Dendritic cell treated with granulocyte-macrophage colony-stimulating factor and Interleukin-4, amounts not matched to agents 40 ng/mL and 50 ng/mL, for 4 days (primary cell): ENCODE measurements at regions of chr1 and their contacts with region 1.

Region 1: DNA sequence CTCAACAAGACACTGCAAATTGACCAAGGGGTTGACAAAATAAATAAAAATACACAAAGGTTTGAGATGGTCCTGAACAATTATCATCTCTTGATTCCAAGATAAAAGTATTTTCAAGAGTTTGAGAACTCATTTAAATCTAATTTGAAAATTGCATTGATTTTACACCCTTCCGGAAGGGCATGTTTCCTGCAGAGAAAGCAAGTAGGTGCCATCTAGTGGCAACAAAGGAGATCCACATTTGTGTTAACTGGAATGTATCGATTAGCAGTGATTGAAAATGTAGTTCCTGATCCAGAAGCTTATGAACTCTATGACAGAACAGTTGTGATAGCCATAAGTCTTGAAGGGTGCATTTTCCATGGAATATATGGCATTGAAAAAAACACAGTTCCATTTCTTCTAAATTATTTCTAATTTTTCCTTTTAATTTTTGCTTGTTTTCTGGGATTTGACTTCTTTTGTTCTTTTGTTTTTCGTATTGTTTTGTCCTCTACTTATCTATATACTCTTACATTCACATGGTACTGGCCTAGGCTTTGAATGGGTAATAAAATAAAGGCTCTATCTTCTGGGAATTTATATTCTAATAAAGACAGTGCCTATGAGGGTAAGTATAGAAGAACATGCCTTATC is 143.7 kb downstream of the DNM3 start:
- H3K4me3 Mint-ChIP-seq: no peak overlapping the region
- H3K27ac Mint-ChIP-seq: no peak overlapping the region
- H3K4me1 Mint-ChIP-seq: no peaks in the 10 kb centered on the region
- H3K27me3 Mint-ChIP-seq: no peaks in the 10 kb centered on the region

Region 2: GRCh38 chr1:171644805-171645483 is 340.0 kb before region 1 on chr1:
- intact Hi-C with region 1: loop called (anchors 2 kb)
- H3K4me3 Mint-ChIP-seq: no peak overlapping the region
- H3K27ac Mint-ChIP-seq: no peak overlapping the region
- H3K4me1 Mint-ChIP-seq: peaks cover 9% of the 10 kb centered on the region
- H3K27me3 Mint-ChIP-seq: no peaks in the 10 kb centered on the region

Region 3: GRCh38 chr1:171801487-171801891 is 183.5 kb before region 1 on chr1:
- intact Hi-C with region 1: loop called (anchors 1 kb)
- H3K4me3 Mint-ChIP-seq: no peak overlapping the region
- H3K27ac Mint-ChIP-seq: no peak overlapping the region
- H3K4me1 Mint-ChIP-seq: peaks cover 21% of the 10 kb centered on the region
- H3K27me3 Mint-ChIP-seq: no peaks in the 10 kb centered on the region

Region 4: DNA sequence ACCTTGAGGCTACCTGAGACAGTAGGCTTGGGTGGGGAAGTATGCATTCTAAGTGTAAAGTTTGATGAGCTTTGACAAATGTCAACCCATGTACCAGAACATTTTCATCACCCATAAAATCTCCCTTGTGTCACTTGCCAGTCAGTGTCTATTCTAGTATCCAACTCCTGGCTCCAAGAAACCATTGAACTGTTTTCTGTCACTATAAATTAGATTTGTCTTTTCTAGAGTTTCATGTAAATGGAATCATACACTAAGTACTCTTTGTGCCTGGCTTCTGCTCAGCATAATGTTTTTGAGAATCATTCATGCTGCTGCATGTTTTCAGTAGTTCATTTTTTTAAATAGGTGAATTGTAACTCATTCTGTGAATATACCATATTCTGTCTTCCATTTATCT is 21.7 kb after region 1 on chr1:
- intact Hi-C with region 1: no loop called
- H3K4me3 Mint-ChIP-seq: no peak overlapping the region
- H3K27ac Mint-ChIP-seq: no peak overlapping the region
- H3K4me1 Mint-ChIP-seq: peaks cover 15% of the 10 kb centered on the region
- H3K27me3 Mint-ChIP-seq: no peaks in the 10 kb centered on the region